Mammary epithelial cell (primary cell): ENCODE measurements at regions of chr12 and their contacts with region 1.

Region 1: GRCh38 chr12:79737875-79738718 is 47.3 kb upstream of the PAWR start:
- DNase-seq: peak; percentile 57
- H3K4me3 ChIP-seq: no peak overlapping the region
- H3K27ac ChIP-seq: no peak overlapping the region
- H3K4me1 ChIP-seq: no peaks in the 10 kb centered on the region
- H3K27me3 ChIP-seq: no peaks in the 10 kb centered on the region
- CTCF ChIP-seq: peak; percentile 62 to 75

Region 2: GRCh38 chr12:79407671-79408622 is 330.1 kb before region 1 on chr12:
- CTCF ChIA-PET with region 1: no interaction called
- dilution Hi-C with region 1: no loop called
- in situ Hi-C with region 1: loop called (anchors 10 kb)
- intact Hi-C with region 1: loop called (anchors 1 kb)
- DNase-seq: peak; percentile 81
- H3K4me3 ChIP-seq: no peak overlapping the region
- H3K27ac ChIP-seq: peak overlapping the region; percentile 20
- H3K4me1 ChIP-seq: peaks cover 38% of the 10 kb centered on the region
- H3K27me3 ChIP-seq: no peaks in the 10 kb centered on the region
- CTCF ChIP-seq: peak; percentile 83 to 90

Region 3: GRCh38 chr12:79420146-79420618 is 317.9 kb before region 1 on chr12:
- CTCF ChIA-PET with region 1: no interaction called
- dilution Hi-C with region 1: no loop called
- in situ Hi-C with region 1: loop called (anchors 10 kb)
- intact Hi-C with region 1: loop called (anchors 1 kb)
- DNase-seq: peak; percentile 76
- H3K4me3 ChIP-seq: no peak overlapping the region
- H3K27ac ChIP-seq: peak overlapping the region; percentile 55
- H3K4me1 ChIP-seq: peaks cover 58% of the 10 kb centered on the region
- H3K27me3 ChIP-seq: no peaks in the 10 kb centered on the region
- CTCF ChIP-seq: peak; percentile 51 to 70

Region 4: DNA sequence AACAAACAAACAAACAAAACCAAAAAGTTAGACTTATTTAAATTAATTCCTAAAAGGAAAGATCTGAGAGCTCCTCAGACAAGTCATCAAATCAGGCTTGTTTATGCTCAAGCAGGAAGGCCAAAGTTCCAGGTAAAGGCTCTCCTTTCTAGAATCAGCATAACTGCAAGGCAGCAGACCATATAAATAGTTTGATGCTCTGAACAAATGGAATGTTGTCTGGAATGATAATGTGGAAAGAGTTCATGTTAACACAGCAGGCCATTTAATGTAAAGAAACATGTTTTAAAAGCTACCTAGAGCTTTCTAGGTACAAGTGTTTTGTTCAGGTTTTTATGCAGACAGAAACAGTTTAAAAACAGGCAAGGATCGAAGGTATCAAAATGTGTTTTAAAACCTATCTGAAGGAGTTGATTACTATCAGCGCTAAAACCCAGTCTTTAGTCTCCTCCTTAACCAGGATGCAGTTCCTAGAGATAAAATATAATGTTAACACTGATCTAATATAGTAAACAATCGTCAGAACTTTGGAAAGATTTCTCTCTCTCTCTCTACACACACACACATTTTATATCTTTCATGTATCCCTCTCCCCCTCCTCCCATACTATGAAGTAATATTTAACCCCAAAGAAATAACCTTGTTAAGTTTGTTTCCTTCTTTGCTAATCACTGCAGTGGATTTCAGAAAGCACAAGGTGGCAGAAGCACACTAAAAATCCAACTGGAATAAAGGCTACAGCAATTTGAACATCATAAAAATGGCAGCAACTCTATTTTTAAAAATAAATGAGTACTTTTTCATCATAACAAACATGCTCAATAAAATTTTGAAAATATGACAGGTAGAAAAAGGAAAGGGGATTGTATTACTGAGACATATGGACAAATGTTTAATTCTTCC is 182.8 kb before region 1 on chr12:
- CTCF ChIA-PET with region 1: no interaction called
- dilution Hi-C with region 1: no loop called
- in situ Hi-C with region 1: loop called (anchors 10 kb)
- intact Hi-C with region 1: loop called (anchors 1 kb)
- DNase-seq: peak; percentile 28
- H3K4me3 ChIP-seq: no peak overlapping the region
- H3K27ac ChIP-seq: no peak overlapping the region
- H3K4me1 ChIP-seq: no peaks in the 10 kb centered on the region
- H3K27me3 ChIP-seq: no peaks in the 10 kb centered on the region
- CTCF ChIP-seq: peak; percentile 44 to 65

Region 5: GRCh38 chr12:79634957-79635471 is 103.1 kb before region 1 on chr12:
- CTCF ChIA-PET with region 1: no interaction called
- dilution Hi-C with region 1: no loop called
- in situ Hi-C with region 1: no loop called
- intact Hi-C with region 1: loop called (anchors 10 kb)
- DNase-seq: peak; percentile 81
- H3K4me3 ChIP-seq: no peak overlapping the region
- H3K27ac ChIP-seq: peak overlapping the region; percentile 69
- H3K4me1 ChIP-seq: peaks cover 18% of the 10 kb centered on the region
- H3K27me3 ChIP-seq: no peaks in the 10 kb centered on the region
- CTCF ChIP-seq: no peak

Region 6: DNA sequence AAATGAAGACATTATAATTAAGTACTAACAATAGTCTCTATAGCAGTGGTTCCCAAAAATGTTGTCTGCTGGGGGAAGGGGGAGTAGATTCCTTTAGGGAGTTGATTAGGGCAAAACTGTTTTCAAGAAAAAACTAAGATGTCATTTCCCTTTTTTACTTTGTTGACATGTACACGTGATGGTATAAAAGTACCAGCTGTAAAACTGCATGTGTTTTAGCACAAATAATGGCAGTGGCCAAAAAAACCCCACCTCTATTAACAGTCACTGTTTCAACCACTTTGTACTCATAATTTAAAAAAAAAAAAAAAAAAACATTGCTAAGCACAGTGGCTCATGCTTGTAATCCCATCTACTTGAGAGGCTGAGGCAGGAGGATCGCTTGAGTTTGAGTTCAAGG is 135.1 kb after region 1 on chr12:
- CTCF ChIA-PET with region 1: no interaction called
- dilution Hi-C with region 1: no loop called
- in situ Hi-C with region 1: no loop called
- intact Hi-C with region 1: no loop called
- DNase-seq: no peak
- H3K4me3 ChIP-seq: no peak overlapping the region
- H3K27ac ChIP-seq: no peak overlapping the region
- H3K4me1 ChIP-seq: no peaks in the 10 kb centered on the region
- H3K27me3 ChIP-seq: no peaks in the 10 kb centered on the region
- CTCF ChIP-seq: no peak